Motor neuron (in vitro differentiated cells): ENCODE measurements at regions of chrX and their contacts with region 1.

Region 1: DNA sequence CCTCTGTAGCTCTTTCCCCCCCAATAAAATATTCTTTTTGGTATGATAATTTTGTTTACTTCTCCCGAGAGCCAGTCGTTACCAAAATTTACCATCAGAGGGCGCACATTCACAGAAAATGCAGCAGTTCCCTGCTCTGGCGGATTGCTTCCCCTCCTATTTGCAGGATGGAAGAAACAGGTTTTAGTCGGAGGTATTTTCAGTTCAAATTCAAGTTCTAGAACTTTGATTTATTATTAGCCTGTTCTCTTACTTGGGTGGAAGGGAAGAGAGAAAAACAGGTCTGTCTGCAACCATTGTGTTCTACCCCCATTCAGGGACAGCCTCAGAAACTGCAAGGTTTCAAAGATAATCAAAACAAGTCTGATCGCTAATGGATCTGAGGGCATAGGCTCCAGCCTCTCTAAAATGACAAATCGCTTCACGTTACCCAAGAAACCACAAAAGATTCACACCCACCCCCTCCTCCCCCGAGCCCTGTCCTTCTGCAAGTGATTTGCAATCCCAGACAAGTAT is 263.8 kb upstream of the RPS6KA3 start:
- ATAC-seq: peak; percentile 66 to 83 (median 74)
- H3K4me3 ChIP-seq: peak overlapping the region; percentile 14 to 32 (median 20)
- H3K27ac ChIP-seq: peak overlapping the region in 1 of 2 donors; percentile 43
- H3K4me1 ChIP-seq: peaks cover 12 to 26% of the 10 kb centered on the region in 2 donors

Region 2: DNA sequence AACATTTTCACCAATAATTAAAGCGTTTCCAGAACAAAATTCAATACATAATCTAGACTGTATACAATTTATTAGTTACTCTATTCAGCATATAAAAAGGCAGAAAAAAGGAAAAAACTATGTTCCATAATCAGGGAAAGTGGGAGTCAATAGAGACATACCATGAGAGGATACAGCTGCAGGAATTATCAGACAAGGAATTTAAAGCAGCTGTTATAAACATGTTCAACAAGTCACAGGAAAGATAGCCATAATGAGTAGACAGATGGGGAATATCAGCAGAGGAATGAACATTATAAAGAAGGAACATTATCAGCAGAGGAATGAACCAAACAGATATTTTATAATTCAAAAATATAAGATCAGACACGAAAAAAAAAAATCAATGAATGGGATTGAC is 236.9 kb after region 1 on chrX:
- in situ Hi-C with region 1: no loop called
- ATAC-seq: no peak
- H3K4me3 ChIP-seq: no peak overlapping the region
- H3K27ac ChIP-seq: no peak overlapping the region
- H3K4me1 ChIP-seq: no peaks in the 10 kb centered on the region

Region 3: GRCh38 chrX:20969002-20969401 is 438.5 kb after region 1 on chrX:
- in situ Hi-C with region 1: loop called in 1 of 9 experiments (anchors 25 kb)
- ATAC-seq: peak in 2 of 8 experiments; percentile 50 to 60
- H3K4me3 ChIP-seq: no peak overlapping the region
- H3K27ac ChIP-seq: no peak overlapping the region
- H3K4me1 ChIP-seq: no peaks in the 10 kb centered on the region

Region 4: GRCh38 chrX:21745756-21746155 is 1215.3 kb after region 1 on chrX:
- in situ Hi-C with region 1: loop called in 1 of 9 experiments (anchors 25 kb)
- ATAC-seq: peak in 2 of 8 experiments; percentile 29 to 30
- H3K4me3 ChIP-seq: no peak overlapping the region
- H3K27ac ChIP-seq: no peak overlapping the region
- H3K4me1 ChIP-seq: peaks cover 0 to 7% of the 10 kb centered on the region in 2 donors